Naive thymus-derived CD8-positive, alpha-beta T cell (primary cell): ENCODE measurements at regions of chr14 and their contacts with region 1.

Region 1: DNA sequence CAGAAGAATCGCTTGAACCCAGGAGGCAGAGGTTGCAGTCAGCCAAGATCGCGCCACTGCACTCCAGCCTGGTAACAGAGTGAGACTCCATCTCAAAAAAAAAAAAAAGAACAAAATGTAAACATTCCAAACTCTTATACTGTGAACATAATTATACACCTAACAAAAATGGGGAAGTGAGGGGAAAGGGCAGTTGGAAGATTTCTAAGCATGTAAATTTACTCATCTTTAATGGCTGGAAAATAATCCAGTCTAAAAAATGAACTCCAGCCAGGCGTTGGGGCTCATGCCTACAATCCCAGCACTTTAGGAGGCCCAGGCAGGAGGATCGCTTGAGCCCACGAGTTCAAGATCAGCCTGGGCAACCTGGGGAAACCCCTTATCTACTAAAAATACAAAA is 11.3 kb upstream of the RPS6KA5 start:
- DNase-seq: no peak
- ATAC-seq: no peak
- H3K4me3 Mint-ChIP-seq: peak overlapping the region in 1 of 10 donors; percentile 45
- H3K27ac Mint-ChIP-seq: no peak overlapping the region
- H3K4me1 Mint-ChIP-seq: peaks cover 14 to 45% (median 39%) of the 10 kb centered on the region in 4 donors
- H3K27me3 Mint-ChIP-seq: peaks cover 0 to 2% (median 0%) of the 10 kb centered on the region in 5 donors

Region 2: GRCh38 chr14:91029456-91030217 is 42.1 kb before region 1 on chr14:
- POLR2A ChIA-PET with region 1: no interaction called
- DNase-seq: no peak
- ATAC-seq: no peak
- H3K4me3 Mint-ChIP-seq: peak overlapping the region in 1 of 10 donors; percentile 34
- H3K27ac Mint-ChIP-seq: peak overlapping the region in 1 of 10 donors; percentile 27
- H3K4me1 Mint-ChIP-seq: peaks cover 18 to 47% (median 33%) of the 10 kb centered on the region in 4 donors
- H3K27me3 Mint-ChIP-seq: no peaks in the 10 kb centered on the region

Region 3: GRCh38 chr14:91100102-91100501 is 28.3 kb after region 1 on chr14:
- POLR2A ChIA-PET with region 1: interaction called, 10 read pairs
- DNase-seq: no peak
- ATAC-seq: no peak
- H3K4me3 Mint-ChIP-seq: no peak overlapping the region
- H3K27ac Mint-ChIP-seq: peak overlapping the region in 1 of 10 donors; percentile 33
- H3K4me1 Mint-ChIP-seq: peaks cover 0 to 3% (median under 1%) of the 10 kb centered on the region in 4 donors
- H3K27me3 Mint-ChIP-seq: peaks cover 0 to 1% (median 0%) of the 10 kb centered on the region in 5 donors